ENCODE measurements at regions of chr1 and their contacts with region 1.

Region 1: DNA sequence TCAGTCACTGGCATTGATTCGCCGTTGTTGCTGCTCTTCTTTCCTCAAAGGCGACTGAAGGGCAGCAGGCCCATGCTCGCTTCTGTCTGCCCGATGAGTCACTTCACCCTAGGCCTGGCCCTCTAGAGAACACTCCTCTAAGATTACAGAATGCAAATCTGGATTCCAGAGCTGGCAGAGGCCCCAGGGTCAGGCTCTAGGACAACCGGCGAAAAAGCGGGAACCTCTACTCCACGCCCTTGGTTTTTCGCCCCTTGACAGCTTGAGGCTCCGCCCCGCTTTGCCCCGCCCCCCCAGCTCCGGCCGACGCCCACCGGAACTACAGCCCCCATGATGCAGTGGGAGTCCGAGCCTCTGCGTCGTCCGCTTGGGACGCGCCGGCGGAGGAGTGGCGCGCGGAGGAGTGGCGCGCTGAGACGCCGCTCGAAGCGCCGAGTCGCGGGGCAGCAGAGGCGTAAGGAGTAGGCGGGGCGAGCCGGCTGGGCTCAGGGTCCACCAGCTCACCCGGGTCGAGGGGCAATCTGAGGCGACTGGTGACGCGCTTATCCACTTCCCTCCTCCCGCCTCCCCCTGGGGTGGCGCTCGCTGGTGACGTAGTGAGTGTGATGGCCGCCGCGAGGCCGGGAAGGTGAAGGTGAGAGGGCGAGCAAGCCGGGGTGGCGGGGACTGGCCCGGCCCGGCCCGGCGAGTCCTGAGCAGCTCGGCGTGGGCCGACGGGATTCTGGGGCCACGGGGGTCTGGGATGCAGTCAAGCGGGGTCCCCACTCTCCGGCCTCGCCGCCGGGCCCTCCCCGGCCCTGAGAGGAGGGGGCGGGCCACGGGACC is at the start of gene MFN2:
- DNase-seq: peak; percentile 96 to 99 (median 97)
- ATAC-seq: peak; percentile 88 to 94 (median 90)
- H3K4me3 ChIP-seq: peak within 1 kb of the TSS; percentile 76 to 97 (median 88)
- H3K27ac ChIP-seq: peak within 1 kb of the TSS; percentile 91 to 99 (median 98)
- H3K4me1 ChIP-seq: peaks cover 0 to 67% (median 52%) of the 10 kb centered on the region in 12 donors
- H3K27me3 ChIP-seq: no peaks in the 10 kb centered on the region
- CTCF ChIP-seq: peak in 1 of 12 donors; percentile 12
- POLR2A ChIP-seq: peak in 1 of 2 donors; percentile 71
- total RNA-seq, gene MFN2: 398 to 900 (median 632) TPM

Region 2: GRCh38 chr1:11907275-11908094 is 72.6 kb before region 1 on chr1:
- intact Hi-C with region 1: loop called in 7 of 10 experiments (anchors 2 to 10 kb)
- DNase-seq: peak; percentile 90 to 94 (median 91)
- ATAC-seq: peak; percentile 82 to 91 (median 88)
- H3K4me3 ChIP-seq: peak overlapping the region in 10 of 12 donors; percentile 59 to 76 (median 66)
- H3K27ac ChIP-seq: peak overlapping the region; percentile 91 to 99 (median 97)
- H3K4me1 ChIP-seq: peaks cover 0 to 17% (median 0%) of the 10 kb centered on the region in 12 donors
- H3K27me3 ChIP-seq: no peaks in the 10 kb centered on the region
- CTCF ChIP-seq: peak; percentile 51 to 99 (median 76)
- POLR2A ChIP-seq: no peak

Region 3: GRCh38 chr1:11918779-11919519 is 61.1 kb before region 1 on chr1:
- intact Hi-C with region 1: loop called in 1 of 10 experiments (anchors 10 kb)
- DNase-seq: peak; percentile 71 to 91 (median 80)
- ATAC-seq: peak; percentile 82 to 89 (median 86)
- H3K4me3 ChIP-seq: no peak overlapping the region
- H3K27ac ChIP-seq: peak overlapping the region in 11 of 12 donors; percentile 37 to 83 (median 70)
- H3K4me1 ChIP-seq: peaks cover 6 to 56% (median 43%) of the 10 kb centered on the region in 12 donors
- H3K27me3 ChIP-seq: no peaks in the 10 kb centered on the region
- CTCF ChIP-seq: no peak
- POLR2A ChIP-seq: no peak

Region 4: GRCh38 chr1:11925938-11926292 is 54.1 kb before region 1 on chr1:
- intact Hi-C with region 1: loop called in 3 of 10 experiments (anchors 1 to 5 kb)
- DNase-seq: peak in 1 of 5 donors; percentile 75
- ATAC-seq: peak in 1 of 4 donors; percentile 4
- H3K4me3 ChIP-seq: peak overlapping the region; percentile 37 to 97 (median 64)
- H3K27ac ChIP-seq: peak overlapping the region in 6 of 12 donors; percentile 46 to 65 (median 52)
- H3K4me1 ChIP-seq: peaks cover 15 to 82% (median 54%) of the 10 kb centered on the region in 12 donors
- H3K27me3 ChIP-seq: no peaks in the 10 kb centered on the region
- CTCF ChIP-seq: no peak
- POLR2A ChIP-seq: no peak

Region 5: GRCh38 chr1:11934302-11935056 is 45.6 kb before region 1 on chr1 and contains the start of gene PLOD1:
- intact Hi-C with region 1: loop called in 3 of 10 experiments (anchors 2 to 5 kb)
- DNase-seq: peak; percentile 91 to 96 (median 91)
- ATAC-seq: peak; percentile 71 to 95 (median 88)
- H3K4me3 ChIP-seq: peak within 1 kb of the TSS; percentile 27 to 92 (median 68)
- H3K27ac ChIP-seq: peak within 1 kb of the TSS; percentile 77 to 94 (median 88)
- H3K4me1 ChIP-seq: peaks cover 6 to 75% (median 58%) of the 10 kb centered on the region in 12 donors
- H3K27me3 ChIP-seq: no peaks in the 10 kb centered on the region
- CTCF ChIP-seq: no peak
- POLR2A ChIP-seq: peak; percentile 20 to 88
- total RNA-seq, gene PLOD1: 37.5 to 104 (median 50.1) TPM

Region 6: GRCh38 chr1:11940260-11940921 is 39.7 kb before region 1 on chr1:
- intact Hi-C with region 1: loop called in 2 of 10 experiments (anchors 2 to 5 kb)
- DNase-seq: peak in 3 of 5 donors; percentile 47 to 71 (median 48)
- ATAC-seq: peak; percentile 25 to 64 (median 48)
- H3K4me3 ChIP-seq: no peak overlapping the region
- H3K27ac ChIP-seq: peak overlapping the region in 7 of 12 donors; percentile 5 to 74 (median 66)
- H3K4me1 ChIP-seq: peaks cover 0 to 67% (median 48%) of the 10 kb centered on the region in 12 donors
- H3K27me3 ChIP-seq: no peaks in the 10 kb centered on the region
- CTCF ChIP-seq: no peak
- POLR2A ChIP-seq: no peak

Region 7: DNA sequence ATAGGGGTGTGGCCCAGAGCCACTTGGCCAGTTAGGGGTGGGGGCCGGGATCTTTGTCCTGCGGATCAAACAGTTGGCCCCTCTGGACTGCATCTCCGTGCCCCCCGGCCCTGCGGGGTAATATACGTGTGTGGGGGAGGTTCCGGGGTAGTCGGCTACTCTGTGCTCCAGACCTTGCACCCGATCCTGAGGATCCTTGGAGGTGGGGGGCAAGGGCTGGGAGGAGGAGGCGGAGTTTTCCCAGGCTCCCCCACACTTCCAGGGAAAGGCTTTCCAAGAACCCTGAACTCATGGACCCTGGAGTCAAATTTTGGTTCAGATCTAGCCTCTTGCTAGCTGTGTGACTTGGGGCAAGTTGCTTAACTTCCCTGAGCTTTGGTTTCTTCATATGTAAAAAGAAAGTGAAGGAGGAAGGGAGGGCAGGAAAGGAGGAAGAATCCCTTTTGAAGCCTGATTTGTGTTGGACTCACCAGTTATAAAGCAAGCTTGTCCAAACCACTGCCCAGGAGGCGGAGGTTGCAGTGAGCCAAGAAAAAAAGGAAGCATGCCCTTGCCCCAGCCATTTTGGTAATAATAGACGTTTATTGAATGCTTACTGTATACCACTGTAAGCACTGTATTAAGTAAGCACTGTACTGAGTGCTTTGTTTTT is 39.9 kb after region 1 on chr1:
- intact Hi-C with region 1: loop called in 1 of 10 experiments (anchors 5 kb)
- DNase-seq: peak in 1 of 5 donors; percentile 52
- ATAC-seq: peak in 2 of 4 donors; percentile 0 to 8
- H3K4me3 ChIP-seq: peak overlapping the region; percentile 74 to 98 (median 92)
- H3K27ac ChIP-seq: peak overlapping the region in 11 of 12 donors; percentile 67 to 88 (median 81)
- H3K4me1 ChIP-seq: peaks cover 0 to 12% (median 8%) of the 10 kb centered on the region in 12 donors
- H3K27me3 ChIP-seq: no peaks in the 10 kb centered on the region
- CTCF ChIP-seq: no peak
- POLR2A ChIP-seq: no peak

Region 8: DNA sequence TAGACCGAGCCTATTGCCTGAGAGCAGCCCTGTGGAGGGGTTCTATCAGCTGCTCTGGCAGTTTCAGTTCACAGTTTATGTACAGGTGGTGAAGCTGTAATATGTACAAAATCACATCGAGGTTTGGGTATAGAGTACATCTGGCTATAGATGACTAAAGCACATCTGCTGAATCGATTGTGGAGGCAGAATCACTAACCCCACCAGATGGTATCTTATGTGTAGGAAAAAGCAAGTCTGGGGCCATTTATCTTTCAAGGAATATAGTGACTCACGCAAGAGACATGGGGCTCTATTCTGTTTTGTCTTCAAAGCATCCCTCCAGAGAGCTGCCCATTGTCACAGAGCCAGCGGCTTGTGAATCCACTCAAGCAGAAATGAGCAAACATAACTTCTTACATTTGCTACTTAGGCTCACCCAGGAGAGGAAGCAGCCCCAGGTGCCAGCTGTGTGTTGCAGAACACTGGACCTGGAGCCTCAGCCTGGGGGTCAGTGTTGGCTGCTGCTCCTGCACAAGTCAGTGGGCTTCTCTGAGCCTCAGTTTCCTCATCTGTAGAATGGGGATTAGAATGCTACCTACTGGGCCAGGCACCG is 60.5 kb after region 1 on chr1:
- intact Hi-C with region 1: no loop called
- DNase-seq: no peak
- ATAC-seq: no peak
- H3K4me3 ChIP-seq: no peak overlapping the region
- H3K27ac ChIP-seq: no peak overlapping the region
- H3K4me1 ChIP-seq: peaks cover 0 to 6% (median 0%) of the 10 kb centered on the region in 12 donors
- H3K27me3 ChIP-seq: no peaks in the 10 kb centered on the region
- CTCF ChIP-seq: no peak
- POLR2A ChIP-seq: no peak

Region 9: GRCh38 chr1:12344596-12345349 is 364.7 kb after region 1 on chr1:
- intact Hi-C with region 1: no loop called
- DNase-seq: peak in 3 of 5 donors; percentile 24 to 41 (median 38)
- ATAC-seq: peak; percentile 38 to 64 (median 50)
- H3K4me3 ChIP-seq: peak overlapping the region; percentile 7 to 48 (median 36)
- H3K27ac ChIP-seq: peak overlapping the region; percentile 15 to 87 (median 72)
- H3K4me1 ChIP-seq: peaks cover 11 to 88% (median 56%) of the 10 kb centered on the region in 12 donors
- H3K27me3 ChIP-seq: no peaks in the 10 kb centered on the region
- CTCF ChIP-seq: no peak
- POLR2A ChIP-seq: no peak

Measured in heart left ventricle (tissue), 16 donors.